HEK293 (cell line): ENCODE measurements at regions of chr1 and their contacts with region 1.

Region 1: DNA sequence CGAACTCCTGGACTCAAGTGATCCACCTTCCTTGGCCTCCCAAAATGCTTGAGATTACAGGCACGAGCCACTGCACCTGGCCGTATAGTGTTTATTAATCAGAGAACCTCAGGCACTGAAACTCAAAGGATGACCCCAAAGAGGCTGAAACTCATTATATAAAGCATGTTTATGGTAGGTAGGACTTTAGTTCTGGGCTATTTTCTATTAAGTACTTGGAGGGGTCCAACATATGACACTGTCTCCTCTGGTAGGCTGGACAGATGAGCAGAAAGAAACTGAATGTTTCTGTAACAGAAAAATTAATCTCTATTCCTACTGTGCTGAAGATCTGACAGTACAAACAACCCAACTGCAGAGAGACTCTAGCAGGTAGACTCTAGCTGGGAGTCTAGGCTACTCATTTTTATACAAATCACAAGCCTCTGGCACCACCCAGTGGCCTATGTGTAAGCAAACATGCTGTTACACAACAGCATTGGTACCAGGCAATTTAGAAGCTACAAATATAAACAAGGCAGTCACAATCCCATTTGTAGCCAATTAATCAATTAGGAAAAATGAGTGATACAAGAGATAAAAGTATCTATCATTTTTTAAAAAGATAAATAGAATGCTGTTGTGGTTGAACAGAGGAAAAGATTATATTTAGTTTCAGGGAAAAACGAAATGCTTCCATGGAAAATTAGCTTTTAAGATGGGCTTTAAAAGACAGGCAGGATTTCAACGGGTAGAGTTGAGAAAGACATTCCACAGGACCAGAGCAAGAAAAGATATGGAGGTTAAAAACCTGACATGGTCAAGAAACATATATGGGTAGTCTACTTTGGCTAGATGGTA is 10.4 kb downstream of the DCAF8 start:
- H3K4me3 ChIP-seq: no peak overlapping the region
- H3K27ac ChIP-seq: no peak overlapping the region
- H3K4me1 ChIP-seq: peaks cover 10% of the 10 kb centered on the region; the same call in 1 of the 2 replicates
- CTCF ChIP-seq: no peak

Region 2: GRCh38 chr1:160098852-160099561 is 152.9 kb before region 1 on chr1:
- CTCF ChIA-PET with region 1: interaction called, 144 read pairs
- POLR2A ChIA-PET with region 1: interaction called, 7 read pairs
- H3K4me3 ChIP-seq: peak overlapping the region; percentile 15
- H3K27ac ChIP-seq: no peak overlapping the region
- H3K4me1 ChIP-seq: peaks cover 4% of the 10 kb centered on the region
- CTCF ChIP-seq: no peak

Region 3: DNA sequence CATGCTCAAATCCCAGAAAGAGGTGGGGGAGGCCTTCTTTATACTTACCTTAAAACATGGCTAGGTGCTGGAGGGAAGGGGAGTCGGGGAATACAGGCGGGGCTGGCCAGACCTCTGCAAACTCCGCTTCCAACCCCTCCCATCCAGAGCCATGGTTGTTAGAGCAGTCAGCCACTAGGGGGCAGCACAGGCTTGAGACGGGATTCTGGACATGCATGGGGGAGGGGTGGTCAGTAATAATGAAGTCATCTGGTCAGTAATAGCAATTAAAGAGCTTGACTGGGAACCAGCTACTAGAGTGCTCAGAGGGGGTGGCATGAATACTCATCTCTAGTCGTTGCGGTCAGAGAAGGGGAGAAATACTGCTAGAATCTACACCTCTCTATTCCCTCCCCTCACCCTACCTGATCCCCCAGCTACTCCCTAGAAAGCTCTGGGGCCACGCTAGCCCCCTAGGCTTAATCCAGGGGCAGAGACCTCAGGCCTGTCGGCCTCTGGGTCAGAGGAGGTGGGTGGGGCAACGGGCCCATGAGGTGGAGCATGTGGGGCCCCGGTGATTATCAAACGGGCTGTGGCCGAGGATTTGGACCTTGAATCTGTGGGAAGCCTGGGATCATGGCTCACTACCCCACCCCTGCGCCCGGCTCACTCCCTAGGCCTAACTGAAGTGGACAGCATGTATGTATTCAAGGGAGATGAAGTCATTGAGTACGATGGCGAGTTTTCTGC is 58.7 kb before region 1 on chr1:
- CTCF ChIA-PET with region 1: interaction called, 88 read pairs
- POLR2A ChIA-PET with region 1: interaction called, 8 read pairs
- H3K4me3 ChIP-seq: no peak overlapping the region
- H3K27ac ChIP-seq: no peak overlapping the region
- H3K4me1 ChIP-seq: no peaks in the 10 kb centered on the region
- CTCF ChIP-seq: peak; percentile 90

Region 4: DNA sequence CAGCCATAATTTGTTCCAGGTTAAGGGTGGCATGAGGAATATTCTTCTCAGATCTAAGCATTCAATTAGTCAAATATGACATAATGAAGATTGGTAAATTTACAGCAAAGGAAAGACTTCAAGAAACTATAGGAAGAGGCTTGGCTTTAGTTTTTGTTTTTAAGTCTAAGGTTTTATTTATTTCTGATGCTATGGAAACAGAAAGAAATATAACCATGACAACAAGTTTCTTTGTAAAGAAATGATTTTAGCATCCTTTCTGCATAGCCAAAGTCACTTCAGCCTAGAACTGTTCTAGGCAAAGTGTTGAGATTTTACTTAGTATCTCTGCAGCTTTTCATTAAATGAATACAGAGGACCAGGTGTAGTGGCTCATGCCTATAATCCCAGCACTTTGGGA is 19.0 kb before region 1 on chr1:
- CTCF ChIA-PET with region 1: interaction called, 19 read pairs
- POLR2A ChIA-PET with region 1: no interaction called
- H3K4me3 ChIP-seq: no peak overlapping the region
- H3K27ac ChIP-seq: no peak overlapping the region
- H3K4me1 ChIP-seq: no peaks in the 10 kb centered on the region
- CTCF ChIP-seq: no peak

Region 5: DNA sequence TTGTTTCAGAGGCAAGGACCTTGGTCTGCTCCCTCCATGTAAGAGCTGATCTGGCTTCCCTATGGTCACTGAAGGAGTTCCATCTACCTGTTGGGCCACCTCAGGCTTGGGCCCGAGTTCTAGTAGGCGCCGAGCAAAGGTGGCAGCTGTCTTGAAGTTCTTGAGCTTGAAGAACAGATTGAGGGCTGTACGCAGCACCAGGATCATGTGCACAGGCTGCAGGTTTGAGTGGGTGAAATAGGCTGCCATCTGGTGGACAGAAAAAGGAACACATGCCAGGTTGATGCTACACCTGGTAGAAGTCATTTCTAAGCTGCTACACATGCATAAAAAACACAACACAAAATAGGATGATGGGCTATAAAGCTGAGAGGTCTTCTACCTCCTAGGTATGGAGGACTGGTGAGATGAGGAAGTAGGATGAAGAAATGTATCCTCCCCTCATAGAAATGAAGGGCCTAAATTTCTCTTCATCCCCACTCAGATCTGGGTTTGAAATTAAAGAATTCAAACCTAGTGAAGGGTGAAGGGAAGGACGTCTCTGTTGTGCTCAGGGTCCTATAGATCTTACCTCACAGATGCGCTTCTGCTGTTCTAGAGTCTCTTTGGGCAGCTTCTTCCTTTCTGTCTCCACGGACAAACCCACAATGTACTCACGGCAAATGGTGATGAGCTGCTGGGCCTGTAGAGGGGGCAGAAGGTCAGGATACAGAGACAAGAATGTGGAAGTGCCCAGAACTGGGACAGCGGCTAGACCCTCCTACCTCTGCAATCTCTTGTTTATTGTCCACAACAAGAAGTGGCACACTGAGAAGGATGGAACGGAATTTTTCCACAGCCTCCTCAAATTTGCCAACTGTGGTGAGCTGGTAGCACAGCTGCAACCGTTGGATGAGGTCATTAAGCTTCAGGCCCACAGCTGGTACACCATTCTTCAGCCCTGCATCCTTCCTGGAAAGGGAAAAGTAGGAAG is 39.6 kb after region 1 on chr1:
- CTCF ChIA-PET with region 1: interaction called, 57 read pairs
- POLR2A ChIA-PET with region 1: interaction called, 3 read pairs
- H3K4me3 ChIP-seq: no peak overlapping the region
- H3K27ac ChIP-seq: no peak overlapping the region
- H3K4me1 ChIP-seq: no peaks in the 10 kb centered on the region
- CTCF ChIP-seq: peak; percentile 70

Region 6: DNA sequence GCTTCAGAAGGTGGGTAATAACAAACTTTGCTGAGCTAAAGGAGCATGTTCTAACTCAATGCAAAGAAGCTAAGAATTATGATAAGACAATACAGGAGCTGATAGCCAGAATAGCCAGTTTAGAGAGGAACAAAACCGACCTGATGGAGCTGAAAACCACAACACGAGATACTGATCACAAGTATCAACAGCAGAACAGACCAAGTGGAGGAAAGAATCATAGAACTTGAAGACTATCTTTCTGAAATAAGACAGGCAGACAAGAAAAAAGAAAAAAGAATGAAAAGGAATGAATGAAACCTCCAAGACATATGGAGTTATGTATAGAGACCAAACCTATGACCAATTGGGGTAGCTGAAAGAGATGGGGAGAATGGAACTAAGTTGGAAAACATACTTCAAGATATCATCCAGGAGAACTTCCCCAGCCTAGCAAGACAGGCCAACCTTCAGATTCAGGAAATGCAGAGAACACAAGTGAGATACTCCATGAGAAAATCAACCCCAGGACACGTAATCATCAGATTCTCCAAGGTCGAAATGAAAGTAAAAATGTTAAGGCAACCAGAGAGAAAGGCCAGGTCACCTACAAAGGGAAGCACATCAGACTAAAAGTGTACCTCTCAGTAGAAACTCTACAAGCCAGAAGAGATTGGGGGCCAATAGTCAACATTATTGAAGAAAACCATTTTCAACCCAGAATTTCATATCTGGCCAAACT is 306.9 kb after region 1 on chr1:
- CTCF ChIA-PET with region 1: no interaction called
- POLR2A ChIA-PET with region 1: no interaction called
- H3K4me3 ChIP-seq: no peak overlapping the region
- H3K27ac ChIP-seq: no peak overlapping the region
- H3K4me1 ChIP-seq: no peaks in the 10 kb centered on the region
- CTCF ChIP-seq: no peak